ENCODE measurements at regions of chr11 and their contacts with region 1.

Region 1: DNA sequence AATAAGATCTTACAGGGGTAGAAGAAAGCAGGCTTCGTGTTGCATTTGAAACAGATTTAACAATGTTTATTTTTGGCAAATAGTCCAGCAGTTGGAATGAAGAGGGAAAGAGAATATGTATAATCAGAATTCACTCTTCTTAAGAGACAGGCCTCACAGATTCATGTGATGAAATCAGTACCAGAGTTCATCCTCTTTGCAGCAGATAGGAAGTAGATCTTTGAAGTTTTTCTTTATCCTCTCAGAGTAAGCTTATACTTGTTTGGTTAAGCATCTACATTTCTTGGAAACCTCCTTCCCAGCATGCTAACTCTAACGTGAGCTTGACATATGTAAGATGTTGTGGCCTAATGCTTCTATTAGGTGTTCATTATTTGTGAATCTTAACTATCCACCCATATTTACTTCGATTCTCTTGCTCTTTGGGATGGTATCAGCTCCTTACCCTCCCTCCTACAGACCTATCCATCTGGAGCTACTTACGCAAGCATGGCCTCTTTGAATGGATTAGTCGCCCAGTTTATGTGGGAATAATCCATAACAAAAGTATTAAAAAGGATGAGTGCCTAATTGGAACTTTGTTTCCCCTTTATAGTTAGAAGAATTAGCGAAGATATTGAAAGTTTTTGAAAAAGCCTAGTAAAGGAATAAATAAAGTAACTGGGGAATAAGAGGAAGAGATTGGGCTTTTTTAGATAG is 80.1 kb downstream of the PRMT3 start:
- DNase-seq: no peak
- ATAC-seq: no peak
- H3K4me3 ChIP-seq: no peak overlapping the region
- H3K27ac ChIP-seq: no peak overlapping the region
- H3K4me1 ChIP-seq: no peaks in the 10 kb centered on the region
- H3K27me3 ChIP-seq: no peaks in the 10 kb centered on the region
- CTCF ChIP-seq: no peak

Region 2: GRCh38 chr11:18534230-18534629 is 1933.4 kb before region 1 on chr11:
- intact Hi-C with region 1: loop called in 1 of 10 experiments (anchors 5 kb)
- DNase-seq: no peak
- ATAC-seq: no peak
- H3K4me3 ChIP-seq: no peak overlapping the region
- H3K27ac ChIP-seq: no peak overlapping the region
- H3K4me1 ChIP-seq: no peaks in the 10 kb centered on the region
- H3K27me3 ChIP-seq: no peaks in the 10 kb centered on the region
- CTCF ChIP-seq: no peak

Measured in heart right ventricle (tissue), 16 donors.